ENCODE measurements at regions of chr1 and their contacts with region 1.

Region 1: DNA sequence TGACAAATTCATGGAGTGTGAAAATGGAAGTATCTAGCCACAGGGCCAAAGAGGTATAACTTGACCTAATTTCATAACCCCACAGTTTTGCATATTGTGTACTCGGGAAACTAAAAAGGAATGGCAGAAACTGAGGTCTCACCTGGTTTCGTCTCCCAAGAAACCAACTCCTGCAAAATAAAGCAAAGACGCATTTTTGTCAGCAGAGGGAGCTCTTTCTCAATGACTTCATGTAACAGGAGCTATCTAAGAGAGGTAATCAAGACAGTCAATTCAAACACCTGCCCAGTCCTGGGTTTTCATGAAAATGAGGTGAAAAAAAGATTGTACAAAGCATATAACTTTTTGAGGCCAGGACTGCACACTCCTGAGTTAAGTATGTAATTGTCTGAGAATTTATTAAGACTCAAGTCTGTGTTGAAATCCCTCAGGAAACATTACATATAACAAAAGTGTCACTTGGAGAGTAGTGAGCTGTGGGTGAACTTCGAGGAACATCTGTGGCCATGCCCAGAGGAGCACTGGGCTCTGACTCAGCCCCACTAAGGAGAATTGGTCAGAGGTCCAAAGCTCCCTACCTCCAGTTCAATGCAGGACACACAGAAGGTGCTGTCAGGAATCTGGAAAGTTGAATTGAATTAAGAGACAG is 17.6 kb downstream of the FCRL4 start:
- DNase-seq: no peak
- ATAC-seq: no peak

Region 2: GRCh38 chr1:157193702-157194391 is 386.5 kb before region 1 on chr1:
- intact Hi-C with region 1: no loop called
- DNase-seq: no peak
- ATAC-seq: no peak

Region 3: DNA sequence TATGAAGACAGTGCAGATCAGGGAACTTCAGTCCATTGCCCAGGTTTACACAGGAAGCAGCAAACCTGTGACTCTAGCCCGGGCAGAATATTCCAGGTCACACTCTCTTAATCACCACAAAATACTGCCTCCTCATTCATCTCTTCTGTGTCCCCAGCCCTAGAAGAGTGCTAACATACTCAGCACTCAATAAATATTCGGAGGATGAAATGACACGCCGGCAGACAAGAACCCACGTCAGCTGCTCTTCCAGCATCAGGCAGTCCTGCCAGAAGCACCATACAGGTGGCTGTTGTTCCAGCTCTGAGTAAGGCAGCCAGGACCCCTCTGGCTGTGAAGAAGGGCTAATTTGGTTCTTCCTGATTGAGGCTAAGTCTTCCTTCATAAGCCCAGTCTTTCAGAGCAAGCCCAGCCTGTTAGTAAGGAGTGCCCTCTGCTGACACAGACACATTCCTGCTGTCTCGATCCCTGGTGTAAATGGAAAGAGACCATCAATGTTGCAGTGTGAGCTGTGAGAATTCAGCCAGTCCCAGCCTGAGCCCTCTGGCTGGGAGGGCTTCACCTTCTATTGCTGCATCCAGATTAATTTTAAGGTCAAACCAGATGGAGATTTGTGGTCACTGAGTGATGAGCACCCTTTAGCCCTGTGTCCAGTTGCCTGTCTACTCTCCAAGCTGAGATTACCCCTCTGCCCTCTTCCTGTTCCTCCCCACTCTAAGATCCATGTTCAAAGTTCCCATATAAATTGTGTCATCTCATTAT is 368.2 kb after region 1 on chr1:
- intact Hi-C with region 1: loop called (anchors 5 kb)
- DNase-seq: no peak
- ATAC-seq: peak; percentile 90

Region 4: GRCh38 chr1:158124999-158125398 is 544.7 kb after region 1 on chr1:
- intact Hi-C with region 1: loop called (anchors 10 kb)
- DNase-seq: peak; percentile 82
- ATAC-seq: peak; percentile 97

Measured in Right ventricle myocardium inferior (tissue), 1 donor.